MCF 10A (cell line): ENCODE measurements at regions of chr1 and their contacts with region 1.

Region 1: GRCh38 chr1:198157241-198157846 is 546 bp downstream of the NEK7 start:
- DNase-seq: peak; percentile 98
- H3K4me3 Mint-ChIP-seq: peak overlapping the region; percentile 85
- H3K27ac Mint-ChIP-seq: peak overlapping the region; percentile 86
- H3K4me1 Mint-ChIP-seq: peaks cover 42% of the 10 kb centered on the region
- H3K27me3 Mint-ChIP-seq: no peaks in the 10 kb centered on the region
- CTCF ChIP-seq: no peak

Region 2: GRCh38 chr1:197692965-197693364 is 464.4 kb before region 1 on chr1:
- CTCF ChIA-PET with region 1: interaction called, 4 read pairs
- POLR2A ChIA-PET with region 1: no interaction called
- intact Hi-C with region 1: loop called (anchors 10 kb)
- DNase-seq: peak; percentile 46
- H3K4me3 Mint-ChIP-seq: no peak overlapping the region
- H3K27ac Mint-ChIP-seq: no peak overlapping the region
- H3K4me1 Mint-ChIP-seq: peaks cover 19% of the 10 kb centered on the region
- H3K27me3 Mint-ChIP-seq: no peaks in the 10 kb centered on the region
- CTCF ChIP-seq: peak; percentile 61

Region 3: GRCh38 chr1:198018529-198018928 is 138.8 kb before region 1 on chr1:
- CTCF ChIA-PET with region 1: no interaction called
- POLR2A ChIA-PET with region 1: interaction called, 3 read pairs
- intact Hi-C with region 1: loop called (anchors 2 kb)
- DNase-seq: peak; percentile 98
- H3K4me3 Mint-ChIP-seq: no peak overlapping the region
- H3K27ac Mint-ChIP-seq: peak overlapping the region; percentile 40
- H3K4me1 Mint-ChIP-seq: peaks cover 15% of the 10 kb centered on the region
- H3K27me3 Mint-ChIP-seq: no peaks in the 10 kb centered on the region
- CTCF ChIP-seq: no peak

Region 4: DNA sequence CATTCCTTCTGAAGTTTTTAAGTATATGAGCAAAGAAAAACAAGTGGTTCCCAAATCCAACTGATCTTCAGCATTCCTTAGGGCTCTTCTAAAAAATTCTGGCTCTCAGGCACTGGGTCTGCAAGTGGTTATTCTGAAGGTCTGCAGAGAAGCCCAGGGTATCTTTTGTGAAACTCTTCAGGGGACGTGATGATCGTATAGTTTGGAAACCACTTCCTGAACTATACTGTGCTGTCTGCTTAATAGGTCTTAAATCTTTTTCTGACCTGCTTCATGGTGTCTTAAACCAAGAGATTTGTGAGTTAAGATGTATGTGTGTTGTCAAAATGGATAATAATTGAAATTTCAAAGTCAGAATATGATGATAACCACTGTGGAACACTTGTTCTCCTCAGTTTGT is 124.7 kb before region 1 on chr1:
- CTCF ChIA-PET with region 1: no interaction called
- POLR2A ChIA-PET with region 1: no interaction called
- intact Hi-C with region 1: no loop called
- DNase-seq: no peak
- H3K4me3 Mint-ChIP-seq: no peak overlapping the region
- H3K27ac Mint-ChIP-seq: no peak overlapping the region
- H3K4me1 Mint-ChIP-seq: peaks cover 9% of the 10 kb centered on the region
- H3K27me3 Mint-ChIP-seq: no peaks in the 10 kb centered on the region
- CTCF ChIP-seq: no peak

Region 5: DNA sequence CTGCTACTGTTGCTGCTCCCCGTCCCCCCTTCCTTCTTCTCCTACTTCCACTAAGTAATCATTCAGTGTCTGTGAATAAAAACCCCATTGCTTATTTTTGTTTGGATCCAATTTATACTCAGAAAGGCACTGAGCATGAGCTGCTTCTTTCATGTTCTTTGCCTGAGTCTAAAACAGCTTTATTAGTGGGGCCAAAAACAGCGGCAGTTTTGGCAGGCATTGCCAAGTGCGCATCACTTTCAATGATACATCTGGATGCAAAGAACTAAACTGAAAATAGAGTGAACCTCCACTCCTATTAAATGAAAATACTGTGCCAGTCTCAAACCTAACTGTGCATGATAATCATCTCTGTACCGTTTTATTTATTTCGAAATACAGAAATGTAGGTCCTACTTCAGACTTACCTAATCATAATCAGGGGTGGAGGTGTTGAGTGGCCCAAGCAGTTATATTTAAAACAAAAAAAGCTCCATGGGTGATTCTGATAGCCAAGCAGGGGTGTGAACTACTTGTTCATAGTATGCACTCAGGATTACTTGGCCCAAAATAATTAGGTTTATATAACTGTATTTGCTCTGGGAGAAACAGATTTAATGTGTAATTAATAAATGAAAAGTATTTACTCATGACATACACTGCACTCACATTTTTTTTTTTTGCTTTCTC is 47.8 kb after region 1 on chr1:
- CTCF ChIA-PET with region 1: interaction called, 3 read pairs
- POLR2A ChIA-PET with region 1: interaction called, 19 read pairs
- intact Hi-C with region 1: no loop called
- DNase-seq: no peak
- H3K4me3 Mint-ChIP-seq: peak overlapping the region; percentile 20
- H3K27ac Mint-ChIP-seq: peak overlapping the region; percentile 79
- H3K4me1 Mint-ChIP-seq: peaks cover 21% of the 10 kb centered on the region
- H3K27me3 Mint-ChIP-seq: no peaks in the 10 kb centered on the region
- CTCF ChIP-seq: no peak

Region 6: GRCh38 chr1:198253668-198254067 is 96.3 kb after region 1 on chr1:
- CTCF ChIA-PET with region 1: interaction called, 3 read pairs
- POLR2A ChIA-PET with region 1: interaction called, 7 read pairs
- intact Hi-C with region 1: loop called (anchors 2 kb)
- DNase-seq: peak; percentile 46
- H3K4me3 Mint-ChIP-seq: peak overlapping the region; percentile 2
- H3K27ac Mint-ChIP-seq: peak overlapping the region; percentile 77
- H3K4me1 Mint-ChIP-seq: peaks cover 16% of the 10 kb centered on the region
- H3K27me3 Mint-ChIP-seq: no peaks in the 10 kb centered on the region
- CTCF ChIP-seq: no peak

Region 7: GRCh38 chr1:198443374-198444233 is 286.3 kb after region 1 on chr1:
- CTCF ChIA-PET with region 1: no interaction called
- POLR2A ChIA-PET with region 1: interaction called, 44 read pairs
- intact Hi-C with region 1: loop called (anchors 2 kb)
- DNase-seq: peak; percentile 99
- H3K4me3 Mint-ChIP-seq: peak overlapping the region; percentile 32
- H3K27ac Mint-ChIP-seq: peak overlapping the region; percentile 85
- H3K4me1 Mint-ChIP-seq: peaks cover 23% of the 10 kb centered on the region
- H3K27me3 Mint-ChIP-seq: no peaks in the 10 kb centered on the region
- CTCF ChIP-seq: no peak

Region 8: DNA sequence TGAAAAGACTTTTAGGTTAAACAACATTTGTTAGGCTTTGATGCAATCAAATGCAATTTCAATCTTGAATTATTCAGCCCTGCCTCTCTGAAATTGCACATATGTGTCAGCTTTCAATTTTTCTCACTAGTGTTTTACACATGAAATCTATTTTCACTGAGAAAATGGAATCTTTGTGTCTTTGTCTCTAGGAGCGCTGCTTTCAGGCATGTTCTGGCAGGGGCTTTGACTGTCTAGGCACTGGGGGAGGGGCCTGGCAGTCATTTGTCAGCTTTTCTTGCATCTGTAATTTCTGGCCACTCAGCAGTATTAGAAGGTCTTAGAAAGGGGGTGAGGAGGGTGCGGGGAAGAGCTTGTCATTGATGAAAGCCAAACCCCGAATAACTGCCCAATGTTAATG is 745.9 kb after region 1 on chr1:
- CTCF ChIA-PET with region 1: no interaction called
- POLR2A ChIA-PET with region 1: no interaction called
- intact Hi-C with region 1: no loop called
- DNase-seq: peak; percentile 66
- H3K4me3 Mint-ChIP-seq: peak overlapping the region; percentile 54
- H3K27ac Mint-ChIP-seq: peak overlapping the region; percentile 94
- H3K4me1 Mint-ChIP-seq: peaks cover 64% of the 10 kb centered on the region
- H3K27me3 Mint-ChIP-seq: no peaks in the 10 kb centered on the region
- CTCF ChIP-seq: no peak